Tibial artery (tissue), 4 donors: ENCODE measurements at regions of chr3 and their contacts with region 1.

Region 1: DNA sequence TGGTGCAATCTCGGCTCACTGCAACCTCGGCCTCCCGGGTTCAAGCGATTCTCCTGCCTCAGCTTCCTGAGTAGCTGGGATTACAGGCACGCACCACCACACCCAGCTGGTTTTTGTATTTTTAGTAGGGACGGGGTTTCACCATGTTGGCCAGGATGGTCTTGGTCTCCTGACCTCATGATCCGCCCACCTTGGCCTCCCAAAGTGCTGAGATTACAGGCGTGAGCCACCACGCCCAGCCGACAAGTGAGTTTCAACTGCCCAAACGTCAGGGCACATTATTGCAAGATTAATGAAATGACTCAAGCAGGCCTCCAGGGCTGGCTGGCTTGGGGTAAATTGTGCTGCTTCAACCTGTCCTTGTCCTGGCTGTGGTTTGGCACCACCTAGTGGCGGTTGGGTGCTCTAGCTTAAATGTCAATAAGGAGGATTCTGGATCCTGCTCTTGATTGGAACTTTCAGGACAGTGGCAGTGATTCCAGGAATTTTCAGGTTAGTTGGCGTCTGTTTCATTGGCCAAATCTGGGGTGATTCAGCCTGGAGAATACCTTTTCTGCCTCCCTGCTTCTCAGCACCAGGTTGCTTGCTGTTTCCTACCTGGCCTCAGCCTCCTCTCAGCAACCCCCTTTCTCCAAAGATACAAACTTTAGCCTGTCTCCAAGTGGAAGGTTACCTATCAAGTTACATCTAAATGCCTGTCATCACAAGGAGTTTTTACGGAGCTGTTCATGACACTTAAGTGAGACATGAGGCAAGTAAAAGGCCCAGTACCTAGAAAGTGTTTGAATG is 32.4 kb upstream of the SACM1L start:
- DNase-seq: peak; percentile 94 to 95
- H3K4me3 ChIP-seq: no peak overlapping the region
- H3K27ac ChIP-seq: peak overlapping the region in 1 of 2 donors; percentile 70
- H3K4me1 ChIP-seq: peaks cover 0 to 60% (median 25%) of the 10 kb centered on the region in 4 donors
- H3K27me3 ChIP-seq: no peaks in the 10 kb centered on the region
- CTCF ChIP-seq: peak; percentile 97 to 98

Region 2: GRCh38 chr3:45037734-45038455 is 618.9 kb before region 1 on chr3:
- intact Hi-C with region 1: loop called (anchors 10 kb)
- DNase-seq: peak; percentile 95 to 97
- H3K4me3 ChIP-seq: no peak overlapping the region
- H3K27ac ChIP-seq: peak overlapping the region in 1 of 2 donors; percentile 72
- H3K4me1 ChIP-seq: peaks cover 0 to 37% (median 19%) of the 10 kb centered on the region in 4 donors
- H3K27me3 ChIP-seq: no peaks in the 10 kb centered on the region
- CTCF ChIP-seq: peak; percentile 87 to 95

Region 3: GRCh38 chr3:45507820-45508317 is 148.9 kb before region 1 on chr3:
- intact Hi-C with region 1: loop called (anchors 2 kb)
- DNase-seq: no peak
- H3K4me3 ChIP-seq: no peak overlapping the region
- H3K27ac ChIP-seq: no peak overlapping the region
- H3K4me1 ChIP-seq: no peaks in the 10 kb centered on the region
- H3K27me3 ChIP-seq: no peaks in the 10 kb centered on the region
- CTCF ChIP-seq: no peak

Region 4: DNA sequence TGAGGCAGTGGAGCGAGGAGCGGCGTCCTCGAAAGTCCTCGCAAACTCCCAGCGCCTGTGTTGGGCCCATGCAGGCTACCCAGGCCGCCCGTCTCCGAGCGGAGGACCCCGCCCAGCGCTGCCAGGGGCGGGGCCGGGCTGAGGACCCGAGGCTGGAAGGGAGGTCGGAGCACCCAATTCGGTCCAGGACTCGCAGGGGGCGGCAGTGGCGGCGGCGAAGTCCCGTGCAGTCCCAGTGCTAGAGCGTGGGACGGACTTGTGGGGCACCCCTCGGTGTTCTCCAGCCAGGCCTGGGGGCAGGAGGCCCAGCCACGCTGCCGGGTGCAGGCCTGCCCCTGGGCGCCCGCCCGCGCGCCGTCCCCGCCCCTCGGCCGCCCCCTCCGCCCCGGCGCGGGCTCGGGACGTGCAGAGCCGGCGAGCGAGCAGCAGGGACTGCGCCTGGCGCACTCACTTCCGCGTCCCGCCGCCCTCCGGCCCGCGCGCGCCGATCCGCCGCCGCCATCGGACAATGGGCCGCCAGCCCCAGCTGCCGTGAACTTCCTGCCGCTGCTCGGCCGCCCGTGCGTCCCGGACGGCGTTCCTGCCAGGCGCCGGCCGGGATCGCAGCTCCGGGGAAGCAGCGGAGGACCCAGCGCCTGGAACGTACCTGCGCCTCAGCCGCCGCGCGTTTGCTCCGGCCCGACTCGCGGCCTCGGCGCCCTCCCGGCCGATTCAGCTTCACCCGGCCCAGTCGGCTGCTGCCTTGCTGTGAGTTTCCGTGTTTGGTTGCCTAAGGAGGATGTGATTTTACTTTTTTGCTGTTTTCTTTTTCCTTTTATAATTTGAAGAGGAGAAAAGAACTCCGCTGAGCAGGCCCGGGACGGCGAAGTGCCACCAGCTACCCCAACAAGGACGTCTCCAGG is 62.8 kb before region 1 on chr3:
- intact Hi-C with region 1: loop called (anchors 5 kb)
- DNase-seq: peak; percentile 50 to 86
- H3K4me3 ChIP-seq: peak overlapping the region; percentile 74 to 86
- H3K27ac ChIP-seq: peak overlapping the region; percentile 89 to 95
- H3K4me1 ChIP-seq: peaks cover 5 to 52% (median 44%) of the 10 kb centered on the region in 4 donors
- H3K27me3 ChIP-seq: no peaks in the 10 kb centered on the region
- CTCF ChIP-seq: no peak